Endothelial cell of umbilical vein (primary cell): ENCODE measurements at regions of chr12 and their contacts with region 1.

Region 1: GRCh38 chr12:32467959-32468863 is 68.9 kb downstream of the FGD4 start:
- DNase-seq: peak; percentile 73
- H3K4me3 ChIP-seq: no peak overlapping the region
- H3K27ac ChIP-seq: no peak overlapping the region
- H3K4me1 ChIP-seq: peaks cover 10% of the 10 kb centered on the region
- H3K27me3 ChIP-seq: no peaks in the 10 kb centered on the region
- CTCF ChIP-seq: no peak
- POLR2A ChIP-seq: no peak

Region 2: DNA sequence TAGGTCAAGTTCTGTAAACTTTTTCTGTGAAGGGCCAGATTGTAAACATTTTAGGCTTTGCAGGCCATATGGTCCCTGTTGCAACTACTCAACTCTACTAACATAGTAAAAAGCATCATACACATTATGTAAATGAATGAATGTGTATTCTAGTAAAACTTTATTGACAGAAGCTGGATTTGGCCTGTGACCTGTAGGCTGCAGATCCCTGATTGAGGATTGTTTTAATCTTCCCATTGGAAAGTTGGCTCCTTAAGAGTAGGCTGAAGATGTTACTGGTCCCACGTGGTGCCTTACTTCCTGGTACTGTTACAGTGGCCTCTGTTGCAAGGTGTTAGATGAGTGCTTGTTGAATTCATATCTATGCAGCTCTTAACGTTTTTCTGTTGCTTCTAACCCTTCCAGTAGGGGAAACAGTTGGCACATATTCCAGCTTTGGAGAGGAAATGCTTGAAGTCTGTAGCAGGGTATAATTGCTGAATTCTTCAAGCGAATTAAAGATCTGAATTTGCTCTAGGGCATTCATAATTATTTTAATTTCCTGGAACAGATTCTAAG is 77.3 kb after region 1 on chr12:
- CTCF ChIA-PET with region 1: no interaction called
- POLR2A ChIA-PET with region 1: no interaction called
- dilution Hi-C with region 1: no loop called
- intact Hi-C with region 1: loop called (anchors 2 kb)
- DNase-seq: peak; percentile 59
- H3K4me3 ChIP-seq: no peak overlapping the region
- H3K27ac ChIP-seq: no peak overlapping the region
- H3K4me1 ChIP-seq: peaks cover 32% of the 10 kb centered on the region
- H3K27me3 ChIP-seq: no peaks in the 10 kb centered on the region
- CTCF ChIP-seq: no peak
- POLR2A ChIP-seq: no peak